CD4-positive, alpha-beta T cell (primary cell): ENCODE measurements at regions of chr19 and their contacts with region 1.

Region 1: GRCh38 chr19:16382775-16383543 is 58.3 kb downstream of the KLF2 start:
- DNase-seq: peak; percentile 69 to 90 (median 82)
- ATAC-seq: peak; percentile 81
- H3K4me3 ChIP-seq: peak overlapping the region; percentile 19
- H3K4me3 Mint-ChIP-seq: peak overlapping the region; percentile 76
- H3K27ac ChIP-seq: peak overlapping the region; percentile 16 to 67
- H3K27ac Mint-ChIP-seq: no peak overlapping the region
- H3K4me1 ChIP-seq: peaks cover 82% of the 10 kb centered on the region
- H3K4me1 Mint-ChIP-seq: peaks cover 62% of the 10 kb centered on the region
- H3K27me3 ChIP-seq: no peaks in the 10 kb centered on the region
- H3K27me3 Mint-ChIP-seq: no peaks in the 10 kb centered on the region
- CTCF ChIP-seq: peak; percentile 92

Region 2: DNA sequence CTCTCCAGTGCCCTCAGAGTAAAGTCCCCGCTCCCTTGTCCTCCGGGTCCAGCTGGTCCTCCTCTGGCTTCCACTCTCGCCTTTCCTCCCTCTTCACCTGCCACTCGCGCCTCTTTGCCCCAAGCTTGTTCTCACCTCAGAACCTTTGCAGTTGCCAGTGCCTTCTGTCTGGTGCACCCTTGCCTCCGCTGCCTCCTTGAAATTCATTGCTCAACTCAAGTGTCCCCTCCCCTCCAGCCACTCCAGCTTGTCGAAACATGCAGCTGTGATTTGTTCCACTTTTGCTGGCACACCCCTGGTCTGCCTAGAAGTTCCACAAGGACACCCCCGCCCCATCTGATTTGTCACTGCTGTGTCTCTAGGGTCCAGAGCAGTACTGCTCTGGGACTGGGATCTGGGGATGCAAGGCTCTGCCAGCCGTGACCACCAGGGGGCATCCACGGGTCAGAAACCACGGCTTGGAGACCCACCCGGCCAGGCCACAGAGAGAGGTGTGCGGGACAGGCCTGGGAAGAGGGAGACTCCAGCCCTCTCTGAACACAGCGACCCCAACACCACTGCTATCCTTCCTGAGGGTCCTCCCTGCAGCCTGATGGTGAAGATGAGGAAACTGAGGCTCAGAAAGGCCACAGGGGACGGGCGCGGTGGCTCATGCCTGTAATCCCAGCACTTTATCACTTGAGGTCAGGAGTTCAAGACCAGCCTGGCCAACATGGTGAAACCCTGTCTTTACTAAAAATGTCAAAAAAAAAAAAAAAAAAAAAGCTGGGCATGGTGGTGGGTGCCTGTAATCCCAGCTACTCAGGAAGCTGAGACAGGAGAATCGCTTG is 135.4 kb before region 1 on chr19:
- CTCF ChIA-PET with region 1: interaction called, 30 read pairs
- POLR2A ChIA-PET with region 1: interaction called, 34 read pairs
- intact Hi-C with region 1: loop called (anchors 1 kb)
- DNase-seq: peak; percentile 64 to 93 (median 83)
- ATAC-seq: peak; percentile 84
- H3K4me3 ChIP-seq: no peak overlapping the region
- H3K4me3 Mint-ChIP-seq: no peak overlapping the region
- H3K27ac ChIP-seq: no peak overlapping the region
- H3K27ac Mint-ChIP-seq: peak overlapping the region; percentile 31
- H3K4me1 ChIP-seq: peaks cover 17% of the 10 kb centered on the region
- H3K4me1 Mint-ChIP-seq: peaks cover 38% of the 10 kb centered on the region
- H3K27me3 ChIP-seq: no peaks in the 10 kb centered on the region
- H3K27me3 Mint-ChIP-seq: no peaks in the 10 kb centered on the region
- CTCF ChIP-seq: peak; percentile 80

Region 3: GRCh38 chr19:16338470-16339360 is 44.2 kb before region 1 on chr19:
- CTCF ChIA-PET with region 1: interaction called, 12 read pairs
- POLR2A ChIA-PET with region 1: interaction called, 3,819 read pairs
- intact Hi-C with region 1: no loop called
- DNase-seq: peak in 12 of 14 experiments; percentile 24 to 82 (median 50)
- ATAC-seq: peak; percentile 54
- H3K4me3 ChIP-seq: peak overlapping the region; percentile 40
- H3K4me3 Mint-ChIP-seq: peak overlapping the region; percentile 90
- H3K27ac ChIP-seq: peak overlapping the region; percentile 14 to 46
- H3K27ac Mint-ChIP-seq: peak overlapping the region; percentile 93
- H3K4me1 ChIP-seq: peaks cover 77% of the 10 kb centered on the region
- H3K4me1 Mint-ChIP-seq: peaks cover 72% of the 10 kb centered on the region
- H3K27me3 ChIP-seq: no peaks in the 10 kb centered on the region
- H3K27me3 Mint-ChIP-seq: no peaks in the 10 kb centered on the region
- CTCF ChIP-seq: peak; percentile 17

Region 4: GRCh38 chr19:16417660-16418596 is 35.0 kb after region 1 on chr19:
- CTCF ChIA-PET with region 1: interaction called, 7 read pairs
- POLR2A ChIA-PET with region 1: interaction called, 3 read pairs
- intact Hi-C with region 1: loop called in 1 of 2 experiments (anchors 2 kb)
- DNase-seq: peak; percentile 57 to 86 (median 67)
- ATAC-seq: peak; percentile 96
- H3K4me3 ChIP-seq: no peak overlapping the region
- H3K4me3 Mint-ChIP-seq: no peak overlapping the region
- H3K27ac ChIP-seq: no peak overlapping the region
- H3K27ac Mint-ChIP-seq: peak overlapping the region; percentile 33
- H3K4me1 ChIP-seq: peaks cover 10% of the 10 kb centered on the region
- H3K4me1 Mint-ChIP-seq: peaks cover 12% of the 10 kb centered on the region
- H3K27me3 ChIP-seq: no peaks in the 10 kb centered on the region
- H3K27me3 Mint-ChIP-seq: no peaks in the 10 kb centered on the region
- CTCF ChIP-seq: peak; percentile 89